HepG2 (cell line): ENCODE measurements at regions of chr17 and their contacts with region 1.

Region 1: DNA sequence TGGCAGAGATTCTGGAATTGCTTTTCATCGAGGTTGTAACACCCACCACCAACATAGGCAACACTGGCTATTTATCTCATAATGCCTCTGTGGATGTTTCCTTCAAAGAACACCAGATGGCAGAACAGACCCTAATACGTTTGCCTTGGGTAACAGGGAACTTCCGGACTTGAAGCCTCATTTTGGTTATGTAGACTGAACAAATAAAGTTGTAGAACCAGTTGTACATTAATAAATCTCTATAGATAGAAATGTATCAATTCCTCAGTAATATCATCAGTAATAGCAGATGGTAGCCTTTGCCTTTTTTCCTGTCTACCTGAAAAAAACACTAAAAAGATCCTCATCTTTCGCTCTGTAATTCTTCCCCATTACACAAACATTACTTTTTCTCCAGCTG is 25.9 kb upstream of the APOH start:
- DNase-seq: peak; percentile 87
- ATAC-seq: peak; percentile 92
- H3K4me3 ChIP-seq: no peak overlapping the region
- H3K27ac ChIP-seq: no peak overlapping the region
- H3K4me1 ChIP-seq: peaks cover 5% of the 10 kb centered on the region; the same call in 1 of the 2 replicates
- H3K27me3 ChIP-seq: no peaks in the 10 kb centered on the region
- CTCF ChIP-seq: peak; percentile 93
- EP300 ChIP-seq: no peak
- POLR2A ChIP-seq: no peak
- RAD21 ChIP-seq: peak; percentile 92

Region 2: DNA sequence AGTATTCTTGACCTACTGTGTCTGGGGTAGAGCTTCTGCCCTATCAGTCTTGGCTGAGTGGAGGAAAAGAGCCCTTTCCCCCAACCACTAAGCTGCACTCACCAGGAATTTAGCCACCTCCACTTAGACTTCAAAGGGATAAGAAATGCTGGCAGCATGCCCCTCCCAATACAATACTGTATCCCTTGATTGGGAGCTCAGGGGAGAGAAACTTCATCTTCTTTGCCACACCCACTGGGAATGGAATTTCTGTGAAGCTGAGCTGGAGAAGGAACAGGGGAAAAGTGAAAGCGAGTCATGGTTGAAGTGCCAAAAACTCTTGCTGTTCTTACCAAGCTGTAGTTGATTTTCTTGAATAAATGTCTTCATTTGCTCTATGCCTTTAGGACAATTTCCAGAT is 131.9 kb before region 1 on chr17:
- CTCF ChIA-PET with region 1: no interaction called
- POLR2A ChIA-PET with region 1: no interaction called
- in situ Hi-C with region 1: no loop called
- intact Hi-C with region 1: no loop called
- DNase-seq: no peak
- ATAC-seq: no peak
- H3K4me3 ChIP-seq: no peak overlapping the region
- H3K27ac ChIP-seq: no peak overlapping the region
- H3K4me1 ChIP-seq: no peaks in the 10 kb centered on the region
- H3K27me3 ChIP-seq: no peaks in the 10 kb centered on the region
- CTCF ChIP-seq: no peak
- EP300 ChIP-seq: no peak
- POLR2A ChIP-seq: no peak
- RAD21 ChIP-seq: no peak

Region 3: DNA sequence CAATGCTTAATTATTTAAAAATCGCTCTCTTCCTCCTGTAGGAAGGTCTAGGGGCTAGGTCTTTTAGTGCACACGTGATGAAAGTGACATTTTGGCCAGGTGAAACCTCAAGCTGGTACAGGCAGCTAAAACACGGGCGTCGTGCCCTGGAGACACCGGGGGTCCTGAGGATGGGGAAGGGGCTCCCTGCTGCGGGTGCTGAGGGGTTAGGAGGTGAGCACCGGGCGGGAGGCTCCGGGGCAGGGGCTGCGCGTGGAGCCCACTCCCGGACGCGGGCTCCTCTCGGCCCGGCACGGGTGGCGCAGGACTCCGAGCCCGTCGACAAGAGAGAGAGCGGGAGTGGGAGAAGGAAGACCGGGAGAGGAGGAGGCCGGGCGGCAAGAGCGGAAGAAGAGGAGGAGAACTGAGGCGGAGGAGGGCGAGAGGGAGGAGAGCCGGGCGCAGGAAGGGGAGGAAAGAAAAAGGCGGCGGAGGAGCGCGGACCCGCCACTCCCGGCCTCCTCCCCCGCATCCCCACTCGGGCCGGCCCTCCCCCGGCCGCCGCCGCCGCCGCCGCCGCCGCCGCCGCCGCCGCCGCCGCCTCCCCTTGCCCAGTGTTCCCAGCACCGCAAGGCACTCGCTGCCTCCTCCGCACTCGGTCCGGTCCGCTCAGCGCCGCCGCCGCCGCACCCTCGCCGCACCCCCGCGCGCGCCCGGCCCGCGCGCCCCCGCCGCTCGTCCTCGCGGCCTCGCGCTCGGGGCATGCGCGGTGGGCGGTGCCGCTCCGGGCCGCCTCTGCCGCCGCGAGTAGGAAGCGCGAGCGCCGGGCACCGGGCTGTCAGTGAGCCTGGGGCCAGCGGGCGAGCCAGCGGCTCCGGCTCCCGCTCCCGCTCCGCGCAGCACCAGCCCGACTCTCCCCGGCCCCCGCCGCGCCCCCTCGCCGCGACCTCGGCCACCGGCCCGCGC is 47.0 kb after region 1 on chr17 and contains the start of gene PRKCA:
- CTCF ChIA-PET with region 1: no interaction called
- POLR2A ChIA-PET with region 1: no interaction called
- in situ Hi-C with region 1: no loop called
- intact Hi-C with region 1: loop called (anchors 1 kb)
- DNase-seq: peak; percentile 54
- ATAC-seq: peak; percentile 60
- H3K4me3 ChIP-seq: peak within 1 kb of the TSS; percentile 88 to 95 (median 91)
- H3K27ac ChIP-seq: peak within 1 kb of the TSS; percentile 61
- H3K4me1 ChIP-seq: peaks cover 32% of the 10 kb centered on the region
- H3K27me3 ChIP-seq: no peaks in the 10 kb centered on the region
- CTCF ChIP-seq: no peak
- EP300 ChIP-seq: no peak
- POLR2A ChIP-seq: peak; percentile 91 to 97
- RAD21 ChIP-seq: no peak; the same call in 1 of the 2 replicates
- total RNA-seq, gene PRKCA: 18.5 and 24.4 TPM in 2 replicates

Region 4: GRCh38 chr17:66337866-66338485 is 82.9 kb after region 1 on chr17:
- CTCF ChIA-PET with region 1: no interaction called
- POLR2A ChIA-PET with region 1: no interaction called
- in situ Hi-C with region 1: no loop called
- intact Hi-C with region 1: no loop called
- DNase-seq: no peak
- ATAC-seq: no peak
- H3K4me3 ChIP-seq: no peak overlapping the region
- H3K27ac ChIP-seq: no peak overlapping the region
- H3K4me1 ChIP-seq: peaks cover 51% of the 10 kb centered on the region
- H3K27me3 ChIP-seq: no peaks in the 10 kb centered on the region
- CTCF ChIP-seq: no peak
- EP300 ChIP-seq: no peak
- POLR2A ChIP-seq: no peak
- RAD21 ChIP-seq: no peak

Region 5: DNA sequence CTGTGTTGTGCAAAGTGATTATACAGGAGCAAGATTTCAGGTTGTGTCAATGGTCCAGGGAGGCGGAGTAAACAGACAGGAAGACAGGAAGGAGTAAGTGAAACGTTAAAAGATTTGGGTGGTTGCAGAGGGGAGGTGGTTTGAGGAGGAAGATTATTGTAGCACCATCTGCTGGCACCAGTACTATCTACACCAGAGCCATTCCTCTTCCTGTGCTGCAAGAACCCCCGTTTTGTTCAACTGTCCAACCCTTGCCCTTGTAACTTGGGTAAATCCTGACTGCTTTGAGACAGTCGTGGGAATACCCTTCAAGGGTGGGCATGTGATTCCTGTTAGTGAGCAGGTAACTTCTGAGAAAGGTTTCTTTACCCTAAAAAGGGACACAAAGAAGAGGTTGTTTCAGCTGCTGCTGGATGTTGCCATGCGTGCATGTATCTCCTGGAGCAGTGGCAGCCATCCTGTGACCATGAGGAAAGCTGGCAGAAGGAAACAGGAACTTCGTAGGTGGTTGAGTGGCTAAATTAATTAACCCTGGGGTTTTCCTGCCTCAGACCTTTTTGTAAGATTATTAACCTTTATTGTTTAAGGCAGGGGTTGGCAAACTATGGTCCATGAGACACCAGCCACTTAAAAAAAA is 171.4 kb after region 1 on chr17:
- CTCF ChIA-PET with region 1: interaction called, 14 read pairs
- POLR2A ChIA-PET with region 1: no interaction called
- in situ Hi-C with region 1: no loop called
- intact Hi-C with region 1: loop called (anchors 2 kb)
- DNase-seq: peak; percentile 66
- ATAC-seq: peak; percentile 93
- H3K4me3 ChIP-seq: no peak overlapping the region
- H3K27ac ChIP-seq: peak overlapping the region; percentile 1
- H3K4me1 ChIP-seq: peaks cover 38% of the 10 kb centered on the region
- H3K27me3 ChIP-seq: no peaks in the 10 kb centered on the region
- CTCF ChIP-seq: peak; percentile 83
- EP300 ChIP-seq: peak in 1 of 2 experiments; percentile 14; a peak in 1 of 4 replicates
- POLR2A ChIP-seq: no peak
- RAD21 ChIP-seq: peak; percentile 79

Region 6: GRCh38 chr17:66541461-66542128 is 286.5 kb after region 1 on chr17:
- CTCF ChIA-PET with region 1: no interaction called
- POLR2A ChIA-PET with region 1: no interaction called
- in situ Hi-C with region 1: no loop called
- intact Hi-C with region 1: no loop called
- DNase-seq: no peak
- ATAC-seq: no peak
- H3K4me3 ChIP-seq: no peak overlapping the region
- H3K27ac ChIP-seq: no peak overlapping the region
- H3K4me1 ChIP-seq: peaks cover 38% of the 10 kb centered on the region
- H3K27me3 ChIP-seq: no peaks in the 10 kb centered on the region
- CTCF ChIP-seq: no peak
- EP300 ChIP-seq: no peak
- POLR2A ChIP-seq: no peak
- RAD21 ChIP-seq: no peak

Region 7: GRCh38 chr17:66567234-66568170 is 312.4 kb after region 1 on chr17:
- CTCF ChIA-PET with region 1: interaction called, 33 read pairs
- POLR2A ChIA-PET with region 1: no interaction called
- in situ Hi-C with region 1: loop called (anchors 5 kb)
- intact Hi-C with region 1: loop called (anchors 1 kb)
- DNase-seq: peak; percentile 73
- ATAC-seq: peak; percentile 96
- H3K4me3 ChIP-seq: no peak overlapping the region
- H3K27ac ChIP-seq: no peak overlapping the region
- H3K4me1 ChIP-seq: peaks cover 15% of the 10 kb centered on the region
- H3K27me3 ChIP-seq: no peaks in the 10 kb centered on the region
- CTCF ChIP-seq: peak; percentile 96
- EP300 ChIP-seq: peak in 1 of 2 experiments; percentile 54; a peak in 1 of 4 replicates
- POLR2A ChIP-seq: no peak
- RAD21 ChIP-seq: peak; percentile 98

Region 8: DNA sequence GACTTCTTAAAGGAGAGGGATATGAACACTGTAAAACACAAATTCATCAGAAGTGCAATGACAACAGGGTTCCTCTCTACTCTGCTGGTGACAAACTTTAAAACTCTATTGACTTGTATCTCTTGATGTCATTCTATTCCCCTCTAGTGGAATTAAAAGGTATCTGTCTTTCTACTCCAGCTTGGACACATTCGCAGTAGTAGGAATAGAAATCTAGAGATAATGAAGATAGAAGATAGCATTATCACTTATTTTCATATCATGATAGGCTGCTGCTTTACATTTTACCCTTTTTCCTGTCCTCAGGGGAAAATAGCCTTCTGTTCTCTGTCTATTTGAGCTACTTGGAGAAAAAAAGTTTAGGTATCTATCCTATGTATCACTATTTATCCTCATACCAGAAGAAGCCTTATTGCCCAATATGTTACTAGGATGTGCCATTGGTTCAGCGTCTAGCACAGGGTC is 370.2 kb after region 1 on chr17:
- CTCF ChIA-PET with region 1: interaction called, 8 read pairs
- POLR2A ChIA-PET with region 1: no interaction called
- in situ Hi-C with region 1: loop called (anchors 10 kb)
- intact Hi-C with region 1: loop called (anchors 1 kb)
- DNase-seq: peak; percentile 41
- ATAC-seq: peak; percentile 81
- H3K4me3 ChIP-seq: no peak overlapping the region
- H3K27ac ChIP-seq: no peak overlapping the region
- H3K4me1 ChIP-seq: peaks cover 22% of the 10 kb centered on the region
- H3K27me3 ChIP-seq: no peaks in the 10 kb centered on the region
- CTCF ChIP-seq: peak; percentile 56
- EP300 ChIP-seq: no peak
- POLR2A ChIP-seq: no peak
- RAD21 ChIP-seq: peak; percentile 61; the same call in 1 of the 2 replicates

Region 9: DNA sequence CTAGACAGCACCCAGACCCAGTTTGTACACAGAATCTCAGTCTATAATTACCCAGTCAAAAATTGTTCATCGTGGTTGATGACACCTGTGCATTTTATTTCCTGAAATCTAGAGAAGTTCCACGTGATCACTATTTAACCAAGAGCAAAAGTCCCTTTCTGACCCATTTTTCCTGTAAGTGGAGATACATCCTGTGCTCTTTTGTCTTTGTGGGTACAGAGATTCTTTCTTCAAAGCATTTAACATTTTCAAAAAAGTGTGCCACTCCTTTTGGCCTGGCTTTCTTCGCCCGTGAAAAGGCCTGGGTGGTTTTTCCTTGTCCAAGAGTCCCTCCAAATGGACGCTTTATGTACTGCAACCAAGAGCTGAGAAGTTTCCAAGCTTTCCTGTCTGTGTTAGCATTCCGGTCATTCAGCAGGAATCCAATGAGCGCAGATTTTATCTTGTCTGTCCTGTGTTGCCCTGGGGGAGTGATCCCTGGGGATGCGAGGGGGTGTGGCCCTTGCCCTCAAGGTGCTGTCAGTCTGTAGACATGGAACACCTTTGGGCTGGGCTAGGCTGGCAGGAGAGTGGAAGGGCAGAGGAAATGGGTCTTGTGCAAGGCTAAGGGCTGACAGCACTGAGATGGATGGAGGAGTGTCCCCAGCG is 418.7 kb after region 1 on chr17:
- CTCF ChIA-PET with region 1: interaction called, 14 read pairs
- POLR2A ChIA-PET with region 1: no interaction called
- in situ Hi-C with region 1: loop called (anchors 5 kb)
- intact Hi-C with region 1: loop called (anchors 1 kb)
- DNase-seq: peak; percentile 43
- ATAC-seq: peak; percentile 83
- H3K4me3 ChIP-seq: no peak overlapping the region
- H3K27ac ChIP-seq: no peak overlapping the region
- H3K4me1 ChIP-seq: peaks cover 8% of the 10 kb centered on the region
- H3K27me3 ChIP-seq: no peaks in the 10 kb centered on the region
- CTCF ChIP-seq: peak; percentile 74
- EP300 ChIP-seq: no peak
- POLR2A ChIP-seq: no peak
- RAD21 ChIP-seq: peak; percentile 74